Activated CD4-positive, alpha-beta T cell treated with anti-CD3 and anti-CD28 coated beads, Interleukin-2, amount 10 ng/mL, durations not matched to agents 24 days and 14 days (primary cell): ENCODE measurements at regions of chrX and their contacts with region 1.

Region 1: GRCh38 chrX:40647307-40648197 is at the start of gene CXorf38:
- DNase-seq: peak; percentile 97
- H3K4me3 Mint-ChIP-seq: peak within 1 kb of the TSS; percentile 91
- H3K27ac Mint-ChIP-seq: peak within 1 kb of the TSS; percentile 92
- H3K4me1 Mint-ChIP-seq: peaks cover 21% of the 10 kb centered on the region
- H3K27me3 Mint-ChIP-seq: no peaks in the 10 kb centered on the region
- total RNA-seq, gene CXorf38: 16.6 and 16.8 TPM in 2 replicates

Region 2: DNA sequence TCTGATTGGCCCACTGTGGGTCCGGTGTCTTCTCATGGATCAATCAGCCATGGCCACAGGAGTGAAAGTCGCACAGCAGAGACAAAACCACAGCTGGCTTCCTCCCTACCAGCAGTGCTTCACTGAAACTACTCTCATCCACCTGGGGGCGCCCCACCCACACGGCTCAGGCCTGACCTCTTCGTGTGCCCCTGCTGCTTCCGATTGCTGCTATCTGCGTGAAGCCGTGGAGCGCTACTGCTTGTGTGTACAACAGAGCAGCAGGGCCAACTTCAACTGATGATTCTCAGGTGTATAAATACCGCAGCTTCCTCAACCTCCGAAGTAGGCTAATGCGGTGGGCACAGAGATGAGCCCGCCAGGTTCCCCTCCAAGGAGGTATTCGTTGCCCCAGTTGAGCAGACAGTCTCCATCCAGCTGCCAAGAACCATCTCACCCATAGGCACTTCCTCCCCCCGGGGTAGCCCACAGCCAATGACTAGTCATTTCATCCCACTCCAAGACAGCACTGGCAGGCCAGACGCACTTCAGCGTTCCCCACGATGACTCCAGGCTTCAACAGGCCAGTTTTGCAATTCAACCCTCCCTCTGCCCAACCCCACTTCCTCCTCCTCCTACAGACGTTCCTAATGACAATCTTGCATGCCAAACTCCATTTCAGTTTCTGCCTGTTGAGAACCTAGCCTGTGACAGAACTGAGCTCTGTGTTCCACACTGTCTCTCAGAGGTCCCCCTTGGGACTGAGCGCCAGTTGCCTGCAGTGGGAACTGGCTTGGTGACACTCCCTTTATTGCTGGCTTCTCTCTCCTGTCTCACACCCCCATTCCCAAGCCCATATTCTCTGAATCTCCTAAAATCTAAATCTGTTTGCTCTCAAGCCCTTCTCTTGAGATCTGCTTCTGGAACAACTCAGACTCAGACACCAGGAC is 108.1 kb before region 1 on chrX:
- intact Hi-C with region 1: loop called (anchors 2 kb)
- DNase-seq: peak; percentile 89
- H3K4me3 Mint-ChIP-seq: peak overlapping the region; percentile 56
- H3K27ac Mint-ChIP-seq: peak overlapping the region; percentile 66
- H3K4me1 Mint-ChIP-seq: peaks cover 19% of the 10 kb centered on the region
- H3K27me3 Mint-ChIP-seq: peaks cover 13% of the 10 kb centered on the region

Region 3: DNA sequence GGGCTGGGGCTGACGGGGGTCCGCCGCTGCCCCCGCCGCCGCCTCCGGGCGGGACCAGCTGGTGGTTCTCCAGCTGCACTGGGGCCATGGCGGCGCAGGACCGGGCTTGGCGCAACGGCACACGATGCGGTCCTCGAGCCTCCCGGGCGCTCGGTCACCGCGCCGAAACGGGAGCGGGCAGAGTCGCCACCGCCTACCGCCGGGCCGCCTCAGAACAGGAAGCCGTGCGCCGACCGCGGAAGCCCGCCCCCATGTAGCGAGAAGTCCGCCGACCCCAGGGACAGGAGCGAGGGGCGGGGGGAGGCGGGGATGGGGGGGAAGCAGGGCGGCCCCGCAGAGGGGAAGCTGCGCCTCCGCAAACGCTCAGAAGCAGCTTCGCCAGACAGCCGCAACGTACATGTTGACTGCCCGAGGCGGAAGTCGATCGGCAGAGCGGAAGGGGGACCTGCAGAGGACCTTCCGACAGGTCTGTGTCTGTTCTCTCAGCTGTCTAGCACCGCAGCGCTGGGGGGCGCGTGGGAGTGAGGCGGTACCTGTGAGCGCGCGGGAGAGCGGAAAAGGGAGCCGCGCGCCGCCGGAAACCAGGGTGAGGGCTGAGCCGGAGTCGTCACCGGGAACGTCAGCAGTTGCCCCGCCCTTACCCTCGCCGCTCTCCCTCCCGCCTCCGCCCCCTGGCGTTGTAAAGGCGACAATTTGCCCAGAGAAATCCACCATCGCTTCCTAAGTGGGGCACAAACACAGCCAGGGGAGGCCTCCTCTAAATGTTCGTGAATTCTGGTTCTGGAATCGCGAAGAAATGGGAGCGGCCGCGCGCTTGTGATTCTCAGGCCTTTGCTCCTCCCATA is 88.0 kb after region 1 on chrX and contains the start of gene MED14:
- intact Hi-C with region 1: loop called (anchors 1 kb)
- DNase-seq: peak; percentile 95
- H3K4me3 Mint-ChIP-seq: peak within 1 kb of the TSS; percentile 86
- H3K27ac Mint-ChIP-seq: peak within 1 kb of the TSS; percentile 94
- H3K4me1 Mint-ChIP-seq: peaks cover 21% of the 10 kb centered on the region
- H3K27me3 Mint-ChIP-seq: no peaks in the 10 kb centered on the region
- total RNA-seq, gene MED14: 43.6 and 48.2 TPM in 2 replicates

Region 4: DNA sequence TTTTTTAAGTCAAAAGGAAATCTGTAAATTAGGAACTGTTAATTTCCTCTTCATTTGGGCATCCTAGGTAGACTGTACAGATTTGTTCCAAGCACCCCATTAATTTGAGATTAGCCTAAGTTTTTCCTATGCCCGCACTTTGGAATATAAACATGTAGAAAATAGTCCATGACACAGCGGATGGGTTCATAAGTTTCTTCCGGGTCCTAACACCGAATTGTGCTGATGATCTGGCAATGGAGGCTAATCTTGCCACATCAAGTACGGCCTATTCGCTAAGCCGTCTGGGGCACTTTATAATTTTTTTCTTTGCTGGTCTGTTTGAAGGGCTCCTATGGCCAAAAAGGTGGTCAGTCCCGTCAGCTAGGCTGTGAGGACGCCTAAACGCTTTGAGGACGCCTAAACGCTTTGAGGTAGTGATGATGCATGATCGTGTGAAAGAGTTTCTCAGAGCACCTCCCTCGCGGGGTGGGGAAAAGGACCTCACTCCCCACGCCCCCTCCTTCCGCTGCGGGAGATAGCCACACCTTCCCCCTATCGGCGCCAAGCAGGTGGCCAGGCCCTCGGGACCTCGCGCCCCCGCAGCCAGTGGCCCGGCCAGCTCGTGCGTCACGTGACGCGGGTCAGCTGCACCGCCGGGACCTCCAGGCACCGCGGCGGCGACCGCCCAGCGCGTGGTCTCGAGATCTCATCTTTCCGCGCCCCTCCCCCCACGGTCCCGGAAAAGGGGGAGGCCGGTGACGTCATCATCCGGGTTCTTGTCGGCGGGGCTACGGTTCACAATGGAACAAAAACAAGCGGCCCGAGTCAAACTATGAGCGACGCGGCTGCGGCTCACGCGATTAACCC is 436.7 kb after region 1 on chrX:
- intact Hi-C with region 1: loop called (anchors 10 kb)
- DNase-seq: peak; percentile 97
- H3K4me3 Mint-ChIP-seq: peak overlapping the region; percentile 92
- H3K27ac Mint-ChIP-seq: peak overlapping the region; percentile 99
- H3K4me1 Mint-ChIP-seq: peaks cover 10% of the 10 kb centered on the region
- H3K27me3 Mint-ChIP-seq: peaks cover 2% of the 10 kb centered on the region

Region 5: DNA sequence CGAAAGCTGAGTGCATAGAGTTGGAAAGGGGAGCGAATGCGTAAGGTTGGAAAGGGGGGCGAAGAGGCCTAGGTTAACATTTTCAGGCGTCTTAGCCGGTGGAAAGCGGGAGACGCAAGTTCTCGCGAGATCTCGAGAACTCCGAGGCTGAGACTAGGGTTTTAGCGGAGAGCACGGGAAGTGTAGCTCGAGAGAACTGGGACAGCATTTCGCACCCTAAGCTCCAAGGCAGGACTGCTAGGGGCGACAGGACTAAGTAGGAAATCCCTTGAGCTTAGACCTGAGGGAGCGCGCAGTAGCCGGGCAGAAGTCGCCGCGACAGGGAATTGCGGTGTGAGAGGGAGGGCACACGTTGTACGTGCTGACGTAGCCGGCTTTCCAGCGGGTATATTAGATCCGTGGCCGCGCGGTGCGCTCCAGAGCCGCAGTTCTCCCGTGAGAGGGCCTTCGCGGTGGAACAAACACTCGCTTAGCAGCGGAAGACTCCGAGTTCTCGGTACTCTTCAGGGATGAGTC is 686.2 kb after region 1 on chrX and contains the start of gene DDX3X:
- intact Hi-C with region 1: loop called (anchors 5 kb)
- DNase-seq: peak; percentile 95
- H3K4me3 Mint-ChIP-seq: peak within 1 kb of the TSS; percentile 98
- H3K27ac Mint-ChIP-seq: peak within 1 kb of the TSS; percentile 100
- H3K4me1 Mint-ChIP-seq: peaks cover 25% of the 10 kb centered on the region
- H3K27me3 Mint-ChIP-seq: no peaks in the 10 kb centered on the region
- total RNA-seq, gene DDX3X: 307 and 313 TPM in 2 replicates